HCT116 (cell line): ENCODE measurements at regions of chr4 and their contacts with region 1.

Region 1: DNA sequence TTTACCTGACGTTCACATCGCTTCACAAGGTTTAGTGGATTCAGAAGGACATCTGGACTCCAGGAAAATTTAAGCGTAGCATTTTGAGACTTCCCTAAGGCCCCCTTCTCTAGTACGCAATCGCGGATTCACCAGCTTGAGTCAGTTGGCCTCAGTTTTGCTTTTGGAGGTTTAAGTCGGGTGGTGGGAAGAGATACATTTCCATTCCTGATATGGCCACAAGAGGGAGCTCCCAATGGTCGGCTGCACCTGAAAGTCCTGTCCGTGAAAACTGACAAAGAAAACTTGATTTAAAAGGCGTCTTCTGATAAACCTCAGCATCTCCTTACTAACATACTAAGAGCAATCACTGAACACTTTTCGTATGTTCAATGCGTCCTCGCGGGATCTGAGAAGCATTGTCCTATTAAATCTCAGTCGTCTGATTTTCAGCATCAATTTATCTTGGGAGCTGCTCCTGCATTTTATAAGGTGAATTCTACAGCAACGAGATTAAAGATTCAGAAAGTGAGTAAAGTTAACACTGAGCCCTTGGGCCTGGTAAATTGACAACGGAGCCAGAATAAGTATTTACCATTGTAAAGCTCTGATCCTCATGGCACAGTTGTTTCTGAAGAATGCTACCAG is 50.6 kb downstream of the LGI2 start:
- DNase-seq: peak; percentile 61
- ATAC-seq: peak; percentile 83
- H3K4me3 ChIP-seq: 0 out of 4 replicates have a peak overlapping the region, but pooled peaks of 1 of the 2 experiments have one; percentile 4
- H3K27ac ChIP-seq: no peak overlapping the region
- H3K4me1 ChIP-seq: peaks cover 0 to 10% of the 10 kb centered on the region in 2 experiments; a peak in 1 of 4 replicates
- H3K27me3 ChIP-seq: no peaks in the 10 kb centered on the region
- CTCF ChIP-seq: peak; percentile 68 to 88 (median 83)
- POLR2A ChIP-seq: no peak
- RAD21 ChIP-seq: peak; percentile 62

Region 2: DNA sequence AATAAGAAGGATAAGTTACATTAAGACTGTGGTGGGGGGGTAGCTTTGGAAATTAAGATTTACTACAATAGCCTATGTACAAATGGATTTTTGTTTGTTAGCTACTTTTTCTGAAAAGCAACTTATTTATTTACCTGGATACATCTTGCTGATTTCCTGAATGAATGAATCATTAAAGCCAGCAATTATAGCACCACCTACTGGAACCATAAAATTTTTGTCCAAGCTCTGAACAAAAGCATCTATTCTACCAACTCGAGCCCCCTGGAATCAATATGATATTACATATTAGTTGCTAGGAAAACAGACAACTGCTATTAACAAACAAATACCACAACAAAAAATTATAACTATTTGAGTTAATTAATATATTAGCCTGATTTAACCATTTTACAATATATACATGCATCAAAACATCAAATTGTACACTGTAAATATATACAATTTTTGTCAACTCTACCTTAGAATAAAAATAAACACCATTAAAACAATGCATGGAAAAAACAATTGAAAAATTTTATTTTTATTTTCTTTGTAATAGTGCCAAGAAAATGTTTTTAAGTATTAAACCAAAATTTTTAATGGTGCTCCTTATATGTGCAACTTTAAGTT is 164.8 kb after region 1 on chr4:
- CTCF ChIA-PET with region 1: interaction called, 12 read pairs
- POLR2A ChIA-PET with region 1: no interaction called
- RAD21 ChIA-PET with region 1: no interaction called
- intact Hi-C with region 1: loop called (anchors 1 kb)
- DNase-seq: peak; percentile 24
- ATAC-seq: peak; percentile 55; the same call in 1 of the 2 replicates
- H3K4me3 ChIP-seq: no peak overlapping the region
- H3K27ac ChIP-seq: no peak overlapping the region
- H3K4me1 ChIP-seq: no peaks in the 10 kb centered on the region
- H3K27me3 ChIP-seq: no peaks in the 10 kb centered on the region
- CTCF ChIP-seq: peak; percentile 31 to 68 (median 66); a peak in 5 of 6 replicates
- POLR2A ChIP-seq: no peak
- RAD21 ChIP-seq: peak; percentile 46; the same call in 1 of the 2 replicates

Region 3: GRCh38 chr4:25367004-25367621 is 386.9 kb after region 1 on chr4:
- CTCF ChIA-PET with region 1: interaction called, 46 read pairs
- POLR2A ChIA-PET with region 1: no interaction called
- RAD21 ChIA-PET with region 1: interaction called in 1 of 2 experiments, 6 read pairs
- intact Hi-C with region 1: loop called (anchors 1 kb)
- DNase-seq: no peak
- ATAC-seq: no peak
- H3K4me3 ChIP-seq: no peak overlapping the region
- H3K27ac ChIP-seq: no peak overlapping the region
- H3K4me1 ChIP-seq: no peaks in the 10 kb centered on the region
- H3K27me3 ChIP-seq: no peaks in the 10 kb centered on the region
- CTCF ChIP-seq: peak; percentile 55 to 72 (median 69); a peak in 5 of 6 replicates
- POLR2A ChIP-seq: no peak
- RAD21 ChIP-seq: peak; percentile 77

Region 4: GRCh38 chr4:25638806-25639205 is 658.6 kb after region 1 on chr4:
- CTCF ChIA-PET with region 1: no interaction called
- POLR2A ChIA-PET with region 1: no interaction called
- RAD21 ChIA-PET with region 1: no interaction called
- intact Hi-C with region 1: no loop called
- DNase-seq: no peak
- ATAC-seq: no peak
- H3K4me3 ChIP-seq: no peak overlapping the region
- H3K27ac ChIP-seq: no peak overlapping the region
- H3K4me1 ChIP-seq: peaks cover 3 to 8% of the 10 kb centered on the region in 2 experiments; a peak in 3 of 4 replicates
- H3K27me3 ChIP-seq: no peaks in the 10 kb centered on the region
- CTCF ChIP-seq: no peak
- POLR2A ChIP-seq: no peak
- RAD21 ChIP-seq: no peak